ENCODE measurements at regions of chr2 and their contacts with region 1.

Region 1: GRCh38 chr2:95402370-95403203 is at the start of gene FAHD2A:
- DNase-seq: peak; percentile 91
- H3K4me3 Mint-ChIP-seq: peak within 1 kb of the TSS; percentile 99
- H3K27ac Mint-ChIP-seq: peak within 1 kb of the TSS; percentile 96
- H3K4me1 Mint-ChIP-seq: peaks cover 8% of the 10 kb centered on the region
- H3K27me3 Mint-ChIP-seq: no peaks in the 10 kb centered on the region
- CTCF ChIP-seq: no peak
- total RNA-seq, gene FAHD2A: 23.9 and 24.1 TPM in 2 replicates

Region 2: DNA sequence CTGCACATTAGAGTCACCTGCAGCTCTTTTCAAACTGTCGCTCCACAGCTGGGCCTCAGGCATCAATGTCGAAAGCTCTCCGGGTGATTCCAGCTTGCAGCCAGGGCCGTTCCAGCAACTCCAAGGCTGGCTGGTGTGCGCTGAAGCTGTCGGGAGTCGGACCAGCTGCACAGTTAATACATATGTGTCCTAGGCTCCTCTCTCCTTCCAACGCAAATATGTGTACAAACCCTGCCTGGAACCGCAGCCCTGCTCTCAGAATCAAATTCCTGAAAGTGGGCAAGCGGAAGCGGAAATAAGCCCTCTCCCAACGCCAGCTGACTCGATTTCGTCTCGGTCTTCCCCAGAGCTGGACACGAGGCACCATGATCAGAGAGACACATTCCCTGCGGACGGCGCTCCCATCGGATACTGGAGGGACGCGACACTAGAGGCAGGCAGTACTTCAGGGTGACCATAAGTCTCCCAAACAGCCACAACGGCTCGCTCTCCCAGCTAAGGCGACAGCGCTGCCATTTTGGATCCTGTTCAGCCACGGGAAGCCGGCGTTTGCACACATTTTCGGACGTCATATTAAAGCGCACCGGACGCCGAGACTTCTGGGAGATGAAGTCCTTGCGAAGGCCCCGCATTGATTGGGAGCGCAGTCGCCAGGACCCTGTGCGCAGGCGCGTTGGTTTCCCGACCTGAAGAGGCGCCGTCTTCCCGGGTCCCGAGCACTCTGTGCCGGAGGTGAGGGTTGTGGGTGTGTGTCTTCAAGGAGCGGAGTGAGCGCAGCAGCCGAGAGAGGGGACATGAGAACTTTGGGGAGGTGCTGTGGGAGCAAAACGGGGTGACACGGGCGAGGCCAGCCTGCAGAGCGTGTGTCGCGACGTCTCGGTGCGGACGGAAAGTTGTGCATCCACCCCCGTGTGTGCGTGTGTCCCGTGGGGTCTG is 237.2 kb before region 1 on chr2 and contains the start of gene ZNF2:
- CTCF ChIA-PET with region 1: interaction called, 3 read pairs
- POLR2A ChIA-PET with region 1: interaction called, 9 read pairs
- intact Hi-C with region 1: loop called (anchors 5 kb)
- DNase-seq: peak; percentile 99
- H3K4me3 Mint-ChIP-seq: peak within 1 kb of the TSS; percentile 100
- H3K27ac Mint-ChIP-seq: peak within 1 kb of the TSS; percentile 98
- H3K4me1 Mint-ChIP-seq: peaks cover 21% of the 10 kb centered on the region
- H3K27me3 Mint-ChIP-seq: no peaks in the 10 kb centered on the region
- CTCF ChIP-seq: no peak
- total RNA-seq, gene ZNF2: 4.1 and 4.4 TPM in 2 replicates

Region 3: GRCh38 chr2:95179451-95179850 is 223.1 kb before region 1 on chr2:
- CTCF ChIA-PET with region 1: no interaction called
- POLR2A ChIA-PET with region 1: no interaction called
- intact Hi-C with region 1: no loop called
- DNase-seq: no peak
- H3K4me3 Mint-ChIP-seq: no peak overlapping the region
- H3K27ac Mint-ChIP-seq: no peak overlapping the region
- H3K4me1 Mint-ChIP-seq: no peaks in the 10 kb centered on the region
- H3K27me3 Mint-ChIP-seq: no peaks in the 10 kb centered on the region
- CTCF ChIP-seq: no peak

Region 4: GRCh38 chr2:95323347-95324185 is 79.0 kb before region 1 on chr2:
- CTCF ChIA-PET with region 1: interaction called, 6 read pairs
- POLR2A ChIA-PET with region 1: no interaction called
- intact Hi-C with region 1: loop called (anchors 2 kb)
- DNase-seq: peak; percentile 80
- H3K4me3 Mint-ChIP-seq: no peak overlapping the region
- H3K27ac Mint-ChIP-seq: no peak overlapping the region
- H3K4me1 Mint-ChIP-seq: peaks cover 10% of the 10 kb centered on the region
- H3K27me3 Mint-ChIP-seq: no peaks in the 10 kb centered on the region
- CTCF ChIP-seq: peak; percentile 76

Region 5: DNA sequence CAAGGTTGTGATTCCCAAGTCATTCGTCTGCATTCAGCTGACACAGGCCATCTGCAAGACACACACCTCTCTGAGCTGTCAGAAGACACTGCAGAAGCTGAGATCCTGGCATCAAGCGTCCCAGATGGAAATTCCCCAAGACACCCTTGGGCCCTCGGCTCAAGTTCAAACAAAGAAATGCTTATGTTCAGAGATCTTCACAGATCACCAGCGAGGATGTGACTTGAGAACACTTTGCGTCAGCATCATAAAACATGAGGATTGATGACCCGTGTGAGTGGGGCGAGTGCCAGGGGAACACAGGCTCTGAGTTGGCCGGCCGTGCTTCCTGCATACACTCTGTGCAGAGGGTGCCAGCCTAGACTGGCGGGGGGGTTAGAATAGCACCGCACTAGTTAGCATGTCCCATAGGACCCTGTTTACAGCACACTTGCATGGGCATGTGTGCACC is 68.7 kb before region 1 on chr2:
- CTCF ChIA-PET with region 1: interaction called, 3 read pairs
- POLR2A ChIA-PET with region 1: interaction called, 14 read pairs
- intact Hi-C with region 1: no loop called
- DNase-seq: peak; percentile 99
- H3K4me3 Mint-ChIP-seq: peak overlapping the region; percentile 52
- H3K27ac Mint-ChIP-seq: peak overlapping the region; percentile 94
- H3K4me1 Mint-ChIP-seq: peaks cover 44% of the 10 kb centered on the region
- H3K27me3 Mint-ChIP-seq: no peaks in the 10 kb centered on the region
- CTCF ChIP-seq: no peak

Region 6: DNA sequence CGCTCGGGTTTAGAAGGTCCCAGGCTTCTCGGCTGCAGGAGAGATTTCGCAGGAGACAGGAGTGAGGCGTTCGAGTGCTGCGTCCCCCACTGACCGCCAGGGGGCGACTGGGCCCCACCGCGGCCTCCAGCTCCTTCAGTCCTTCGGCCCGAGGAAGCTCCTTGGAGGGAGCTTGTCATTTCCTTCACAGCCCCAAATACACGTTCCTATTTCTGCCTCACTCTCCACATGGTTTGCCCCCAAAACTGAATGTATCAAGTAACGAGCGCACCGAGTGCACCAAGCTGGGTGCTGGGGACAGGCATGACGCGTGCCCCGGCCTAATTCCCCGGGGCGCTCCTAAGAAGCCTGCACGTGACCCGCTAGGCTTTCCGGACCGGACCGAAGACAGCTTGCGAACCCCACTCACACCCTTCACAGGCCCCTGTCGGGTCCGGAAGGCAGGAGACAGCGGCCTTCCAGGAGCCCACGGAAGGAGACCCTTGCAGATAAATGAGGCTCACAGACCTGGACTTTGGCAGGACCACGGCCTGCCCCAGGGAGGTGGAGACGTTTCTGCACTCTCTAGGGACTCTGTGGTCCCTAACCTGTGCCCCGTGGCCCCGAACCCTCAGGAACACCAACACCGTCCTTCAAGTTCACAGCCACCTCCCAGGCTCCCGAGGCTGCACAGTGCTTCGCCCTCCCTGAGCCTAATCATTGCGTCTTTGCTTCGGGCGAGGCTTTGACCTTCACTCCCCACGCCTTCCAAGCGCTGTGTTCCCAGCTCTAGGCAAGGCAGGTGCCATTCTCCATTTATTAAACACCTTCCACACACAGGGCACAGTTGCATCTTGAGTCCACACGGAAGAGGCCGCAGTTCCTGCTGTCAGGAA is 13.1 kb before region 1 on chr2:
- CTCF ChIA-PET with region 1: interaction called, 19 read pairs
- POLR2A ChIA-PET with region 1: interaction called, 16 read pairs
- intact Hi-C with region 1: no loop called
- DNase-seq: peak; percentile 73
- H3K4me3 Mint-ChIP-seq: no peak overlapping the region
- H3K27ac Mint-ChIP-seq: no peak overlapping the region
- H3K4me1 Mint-ChIP-seq: peaks cover 7% of the 10 kb centered on the region
- H3K27me3 Mint-ChIP-seq: no peaks in the 10 kb centered on the region
- CTCF ChIP-seq: peak; percentile 90

Region 7: GRCh38 chr2:95728878-95729596 is 326.4 kb after region 1 on chr2:
- CTCF ChIA-PET with region 1: interaction called, 15 read pairs
- POLR2A ChIA-PET with region 1: interaction called, 5 read pairs
- intact Hi-C with region 1: no loop called
- DNase-seq: peak; percentile 73
- H3K4me3 Mint-ChIP-seq: no peak overlapping the region
- H3K27ac Mint-ChIP-seq: no peak overlapping the region
- H3K4me1 Mint-ChIP-seq: no peaks in the 10 kb centered on the region
- H3K27me3 Mint-ChIP-seq: peaks cover 17% of the 10 kb centered on the region
- CTCF ChIP-seq: peak; percentile 73

Measured in MCF 10A (cell line).